K562 (cell line): ENCODE measurements at regions of chr7 and their contacts with region 1.

Region 1: DNA sequence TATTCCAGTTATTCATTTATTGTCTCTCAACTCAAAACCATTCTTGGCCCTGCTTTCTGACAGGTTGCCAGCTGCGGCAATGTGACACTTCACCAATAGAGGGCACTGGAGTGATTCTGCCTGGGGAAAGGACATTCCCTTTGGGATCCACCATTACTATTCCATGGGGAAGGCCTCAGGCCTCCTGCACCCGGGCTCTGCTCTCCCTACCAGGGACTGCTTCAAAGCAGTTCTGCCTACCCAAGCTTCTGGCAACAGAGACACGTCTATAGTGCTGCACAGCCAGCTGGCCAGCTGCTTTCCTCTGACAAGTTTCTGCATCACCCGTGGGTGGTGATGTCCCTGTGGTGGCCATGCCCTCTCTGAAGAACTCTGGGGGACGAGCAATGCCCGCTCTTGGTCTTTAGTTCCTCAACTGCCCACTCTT is 163.8 kb downstream of the ELMO1 start:
- DNase-seq: peak; percentile 35 to 52 (median 40)
- ATAC-seq: peak; percentile 84
- H3K4me3 ChIP-seq: no peak overlapping the region
- H3K27ac ChIP-seq: no peak overlapping the region
- H3K4me1 ChIP-seq: no peaks in the 10 kb centered on the region
- H3K27me3 ChIP-seq: peaks cover 0 to under 1% of the 10 kb centered on the region in 2 experiments; a peak in 1 of 5 replicates
- CTCF ChIP-seq: peak; percentile 74 to 90 (median 84)
- EP300 ChIP-seq: no peak
- POLR2A ChIP-seq: no peak
- RAD21 ChIP-seq: peak; percentile 63 to 80

Region 2: GRCh38 chr7:37297546-37297945 is 12.7 kb after region 1 on chr7:
- CTCF ChIA-PET with region 1: no interaction called
- POLR2A ChIA-PET with region 1: no interaction called
- in situ Hi-C with region 1: no loop called
- intact Hi-C with region 1: no loop called
- DNase-seq: no peak
- ATAC-seq: no peak
- H3K4me3 ChIP-seq: no peak overlapping the region
- H3K27ac ChIP-seq: no peak overlapping the region
- H3K4me1 ChIP-seq: no peaks in the 10 kb centered on the region
- H3K27me3 ChIP-seq: no peaks in the 10 kb centered on the region
- CTCF ChIP-seq: no peak
- EP300 ChIP-seq: no peak
- POLR2A ChIP-seq: no peak
- RAD21 ChIP-seq: no peak

Region 3: DNA sequence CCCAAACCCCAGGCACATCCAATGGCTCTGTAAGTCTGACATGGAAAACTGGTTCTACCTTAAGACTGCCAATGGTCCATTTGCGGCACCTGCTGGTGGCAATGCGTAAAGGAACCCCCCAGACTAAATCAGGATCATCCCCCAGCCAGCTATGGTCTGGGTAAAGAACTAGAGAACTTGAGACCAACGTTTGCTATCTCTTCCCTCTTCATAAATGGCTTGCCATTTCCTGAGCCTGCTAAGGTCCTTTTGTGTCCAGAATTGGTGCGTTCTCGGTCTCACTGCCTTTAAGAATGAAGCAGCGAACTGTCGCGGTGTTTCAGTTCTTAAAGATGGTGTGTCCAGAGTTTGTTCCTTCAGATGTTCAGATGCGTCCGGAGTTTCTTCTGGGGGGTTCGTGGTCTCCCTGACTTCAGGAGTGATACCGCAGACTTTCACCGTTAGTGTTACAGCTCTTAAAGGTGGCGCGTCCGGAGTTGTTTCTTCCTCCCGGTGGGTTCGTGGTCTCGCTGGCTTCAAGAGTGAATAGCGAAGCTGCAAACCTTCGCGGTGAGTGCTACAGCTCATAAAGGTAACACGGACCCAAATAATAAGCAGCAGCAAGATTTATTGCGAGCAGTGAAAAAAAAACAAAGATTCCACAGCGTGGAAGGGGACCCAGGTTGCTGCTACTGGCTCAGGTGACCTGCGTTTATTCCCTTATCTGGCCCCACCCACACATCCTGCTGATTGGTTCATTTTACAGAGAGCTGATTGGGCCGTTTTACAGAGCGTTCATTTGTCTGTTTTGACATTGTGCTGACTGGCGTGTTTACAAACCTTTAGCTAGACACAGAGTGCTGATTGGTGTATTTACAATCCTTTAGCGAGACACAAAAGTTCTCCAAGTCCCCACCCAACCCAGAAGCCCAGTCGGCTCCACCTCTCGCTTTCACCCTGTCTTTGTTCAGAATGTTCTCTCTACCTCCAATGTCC is 68.4 kb after region 1 on chr7:
- CTCF ChIA-PET with region 1: no interaction called
- POLR2A ChIA-PET with region 1: no interaction called
- in situ Hi-C with region 1: no loop called
- intact Hi-C with region 1: loop called (anchors 5 kb)
- DNase-seq: peak in 2 of 4 experiments; percentile 35 to 41
- ATAC-seq: no peak
- H3K4me3 ChIP-seq: no peak overlapping the region
- H3K27ac ChIP-seq: peak overlapping the region; percentile 75; the same call in 1 of the 3 replicates
- H3K4me1 ChIP-seq: peaks cover 0 to 37% of the 10 kb centered on the region in 2 experiments; a peak in 4 of 5 replicates
- H3K27me3 ChIP-seq: no peaks in the 10 kb centered on the region
- CTCF ChIP-seq: peak; percentile 39 to 50 (median 46); a peak in 5 of 6 replicates
- EP300 ChIP-seq: no peak
- POLR2A ChIP-seq: no peak
- RAD21 ChIP-seq: peak in 1 of 2 experiments; percentile 35; a peak in 1 of 4 replicates

Region 4: DNA sequence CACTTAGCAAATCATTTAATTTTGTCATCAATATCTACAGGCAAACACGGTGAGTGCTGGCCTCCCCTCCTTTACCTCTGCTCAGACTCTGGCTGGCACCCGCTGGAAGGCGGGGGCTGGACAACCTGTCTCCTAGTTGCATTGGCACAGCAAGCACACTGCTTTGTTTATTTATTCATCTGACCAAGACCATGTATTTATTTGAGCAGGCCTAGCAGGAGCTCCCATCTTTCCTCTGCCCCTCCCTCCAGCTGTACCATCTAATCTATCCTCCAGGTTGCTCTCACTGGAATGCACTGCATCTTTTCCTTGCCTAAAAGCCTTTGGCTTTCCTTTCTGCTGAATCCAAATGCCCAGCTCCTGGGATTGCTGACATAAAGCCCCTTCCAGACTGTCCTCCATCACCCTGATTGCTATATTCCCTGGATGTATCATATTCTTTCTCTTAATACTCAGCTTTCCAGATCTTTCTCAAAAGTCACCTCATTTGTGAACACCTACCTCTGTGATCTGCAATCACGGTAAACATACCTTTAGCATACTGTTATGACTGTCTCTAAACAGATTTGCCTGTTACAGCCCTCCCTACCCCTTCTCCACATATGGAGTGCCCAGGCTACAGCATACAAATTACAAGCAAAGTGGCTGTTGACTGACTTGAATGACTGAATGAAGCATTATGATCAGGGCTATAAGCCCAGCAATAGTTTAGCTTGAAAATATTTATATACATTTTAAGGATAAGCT is 154.3 kb after region 1 on chr7:
- CTCF ChIA-PET with region 1: no interaction called
- POLR2A ChIA-PET with region 1: no interaction called
- in situ Hi-C with region 1: no loop called
- intact Hi-C with region 1: loop called (anchors 5 kb)
- DNase-seq: no peak
- ATAC-seq: no peak
- H3K4me3 ChIP-seq: no peak overlapping the region
- H3K27ac ChIP-seq: no peak overlapping the region
- H3K4me1 ChIP-seq: no peaks in the 10 kb centered on the region
- H3K27me3 ChIP-seq: peaks cover 0 to 11% of the 10 kb centered on the region in 2 experiments; a peak in 3 of 5 replicates
- CTCF ChIP-seq: no peak
- EP300 ChIP-seq: no peak
- POLR2A ChIP-seq: no peak
- RAD21 ChIP-seq: no peak

Region 5: DNA sequence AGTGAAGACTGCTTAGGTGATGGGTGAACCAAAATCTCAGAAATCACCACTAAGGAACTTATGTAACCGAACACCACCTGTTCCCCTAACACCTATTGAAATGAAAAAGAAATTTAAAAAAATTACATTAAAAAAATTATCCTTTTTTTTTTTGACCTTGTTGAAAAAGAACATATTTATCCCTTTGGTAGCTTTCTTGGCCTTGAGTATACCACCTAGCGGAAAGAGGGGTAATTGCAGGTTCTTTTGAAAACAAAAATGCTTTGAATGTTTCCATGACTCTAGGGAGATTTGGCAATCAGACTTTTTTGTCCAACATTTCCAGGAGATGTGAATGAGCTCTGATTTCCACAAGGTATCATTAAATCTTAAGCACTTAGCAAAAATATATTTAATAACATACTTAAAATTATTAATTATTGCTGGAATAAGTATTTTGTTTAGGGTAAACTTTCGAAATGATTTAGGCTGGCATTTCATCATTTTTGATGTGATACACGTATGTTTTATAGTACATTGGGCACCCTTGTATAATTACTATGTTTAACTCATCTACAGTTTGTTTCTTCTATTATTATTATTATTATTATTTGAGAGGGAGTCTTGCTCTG is 210.9 kb after region 1 on chr7:
- CTCF ChIA-PET with region 1: no interaction called
- POLR2A ChIA-PET with region 1: no interaction called
- in situ Hi-C with region 1: no loop called
- intact Hi-C with region 1: loop called (anchors 1 kb)
- DNase-seq: peak; percentile 11 to 28 (median 26)
- ATAC-seq: 0 out of 3 replicates have a peak, but pooled peaks have one; percentile 38
- H3K4me3 ChIP-seq: no peak overlapping the region
- H3K27ac ChIP-seq: no peak overlapping the region
- H3K4me1 ChIP-seq: peaks cover 0 to 5% of the 10 kb centered on the region in 2 experiments; a peak in 1 of 5 replicates
- H3K27me3 ChIP-seq: no peaks in the 10 kb centered on the region
- CTCF ChIP-seq: peak; percentile 12 to 75 (median 37); a peak in 4 of 6 replicates
- EP300 ChIP-seq: no peak
- POLR2A ChIP-seq: no peak
- RAD21 ChIP-seq: peak; percentile 39 to 50; a peak in 3 of 4 replicates

Region 6: DNA sequence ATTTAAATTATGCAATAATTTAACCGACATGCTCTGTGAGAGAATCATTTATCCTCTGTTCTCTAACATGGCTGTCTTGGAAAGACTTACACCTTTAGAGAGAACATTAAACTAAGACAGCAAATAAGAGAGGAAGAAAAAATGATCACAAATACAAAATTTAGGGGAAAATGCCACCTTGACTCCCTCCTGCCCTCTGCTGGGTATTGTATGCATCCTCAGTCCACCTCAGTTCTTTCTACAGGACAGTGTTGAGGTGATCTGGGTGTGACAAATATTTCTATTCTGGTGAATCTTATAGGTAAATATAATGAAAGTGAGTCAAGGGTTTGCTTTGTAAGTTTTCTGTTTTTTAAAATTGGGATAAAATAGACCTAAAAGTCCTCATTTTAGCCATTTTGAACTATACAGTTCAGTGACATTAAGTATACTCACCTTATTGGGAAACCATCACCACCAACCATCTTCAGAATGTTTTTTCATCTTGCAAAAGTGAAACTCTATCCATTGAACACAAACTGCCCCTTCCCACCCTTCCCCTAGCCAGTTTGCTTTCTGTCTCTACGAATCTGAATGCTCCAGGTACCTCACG is 225.3 kb after region 1 on chr7:
- CTCF ChIA-PET with region 1: interaction called, 10 read pairs
- POLR2A ChIA-PET with region 1: no interaction called
- in situ Hi-C with region 1: no loop called
- intact Hi-C with region 1: no loop called
- DNase-seq: peak; percentile 23 to 34 (median 26)
- ATAC-seq: peak; percentile 76
- H3K4me3 ChIP-seq: no peak overlapping the region
- H3K27ac ChIP-seq: no peak overlapping the region
- H3K4me1 ChIP-seq: no peaks in the 10 kb centered on the region
- H3K27me3 ChIP-seq: peaks cover 0 to 4% of the 10 kb centered on the region in 2 experiments; a peak in 2 of 5 replicates
- CTCF ChIP-seq: peak; percentile 47 to 68 (median 63); a peak in 5 of 6 replicates
- EP300 ChIP-seq: no peak
- POLR2A ChIP-seq: no peak
- RAD21 ChIP-seq: peak; percentile 59 to 69

Region 7: DNA sequence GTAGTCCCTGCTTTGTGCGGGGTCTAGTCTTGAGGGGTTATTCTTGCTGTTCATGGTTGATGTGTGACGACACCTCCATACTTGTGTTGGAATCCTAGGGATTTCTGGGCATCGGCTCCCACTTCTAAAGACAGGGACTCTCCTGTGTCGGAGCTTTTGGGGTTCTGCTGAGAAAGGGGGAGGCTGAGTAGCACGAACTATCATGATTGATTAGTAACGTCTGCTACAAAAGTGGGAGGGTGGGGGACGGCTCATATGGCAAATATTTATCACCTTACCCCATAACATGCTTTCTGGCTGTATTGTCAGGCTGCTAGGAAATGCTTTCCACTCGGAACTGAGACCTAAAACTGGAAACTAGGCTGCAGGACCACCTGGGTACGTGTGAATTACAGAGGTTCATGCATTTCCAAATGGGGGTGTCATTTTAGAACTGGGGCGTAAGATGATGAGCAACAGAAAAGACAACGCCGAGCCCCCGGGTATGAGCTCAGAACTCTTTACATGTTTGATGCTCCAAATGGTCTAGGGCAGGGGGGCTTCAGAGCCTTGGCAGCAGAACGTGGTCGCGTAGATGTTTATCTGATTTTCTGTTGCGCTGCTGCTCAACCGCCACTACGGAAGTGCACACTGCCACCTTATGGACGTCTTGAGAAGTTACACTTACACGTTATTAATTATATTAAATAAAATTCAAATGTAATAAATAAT is 548.4 kb after region 1 on chr7:
- CTCF ChIA-PET with region 1: interaction called, 3 read pairs
- POLR2A ChIA-PET with region 1: no interaction called
- in situ Hi-C with region 1: no loop called
- intact Hi-C with region 1: loop called (anchors 5 kb)
- DNase-seq: peak; percentile 39 to 56 (median 50)
- ATAC-seq: peak; percentile 53; the same call in 2 of the 3 replicates
- H3K4me3 ChIP-seq: peak overlapping the region; percentile 29
- H3K27ac ChIP-seq: no peak overlapping the region
- H3K4me1 ChIP-seq: no peaks in the 10 kb centered on the region; a peak in 1 of 5 replicates
- H3K27me3 ChIP-seq: 0 out of 5 replicates have a peak, but pooled peaks cover 0 to 4% of the 10 kb centered on the region in 2 experiments
- CTCF ChIP-seq: peak; percentile 65 to 73 (median 68)
- EP300 ChIP-seq: no peak
- POLR2A ChIP-seq: no peak
- RAD21 ChIP-seq: peak; percentile 69 to 79